ENCODE measurements at regions of chr4 and their contacts with region 1.

Region 1: DNA sequence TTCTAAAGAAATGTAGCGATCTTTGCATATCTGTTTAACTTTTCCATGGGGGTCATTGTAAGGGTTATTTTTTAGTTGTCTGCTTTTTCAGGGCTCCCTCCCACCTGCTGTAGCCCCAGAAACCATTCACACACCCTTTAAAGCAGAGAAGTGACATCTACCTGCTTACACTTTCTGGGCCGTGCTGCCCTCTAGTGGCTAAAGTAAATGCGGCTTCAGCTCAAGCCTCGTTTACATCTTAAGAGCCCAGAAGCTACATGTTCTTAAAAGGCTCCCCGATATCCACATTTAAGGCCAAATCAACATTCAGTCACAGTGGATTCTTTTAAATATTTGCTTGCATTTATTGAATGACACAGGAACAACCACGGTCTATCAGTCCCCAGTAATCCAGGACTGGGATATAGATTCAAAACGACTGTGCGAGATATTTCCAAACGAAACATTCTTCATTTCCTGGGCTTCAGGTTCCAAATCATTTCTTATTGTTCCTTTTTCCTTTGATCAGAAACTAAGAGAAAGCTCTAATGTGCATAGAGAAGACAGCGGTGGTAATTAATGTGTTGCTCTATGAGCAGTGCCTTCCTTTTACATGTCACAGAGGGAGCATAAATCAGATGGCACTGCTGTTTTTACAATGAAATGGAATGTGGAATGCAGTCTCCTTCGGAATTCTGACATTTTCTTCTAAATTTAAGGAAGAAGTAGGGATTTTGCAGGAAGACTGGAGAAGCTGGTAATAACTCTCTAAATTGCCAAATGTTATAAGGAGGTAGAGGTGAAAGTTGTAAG is 119.9 kb downstream of the RASGEF1B start:
- DNase-seq: peak; percentile 46 to 64
- ATAC-seq: peak in 3 of 8 donors; percentile 34 to 67 (median 48)
- H3K4me3 ChIP-seq: no peak overlapping the region
- H3K27ac ChIP-seq: no peak overlapping the region
- H3K4me1 ChIP-seq: no peaks in the 10 kb centered on the region
- H3K27me3 ChIP-seq: peaks cover 0 to 8% (median 0%) of the 10 kb centered on the region in 7 donors
- CTCF ChIP-seq: peak; percentile 56 to 90 (median 87)

Region 2: GRCh38 chr4:81069706-81070331 is 282.0 kb before region 1 on chr4:
- intact Hi-C with region 1: loop called (anchors 1 to 5 kb)
- DNase-seq: peak in 1 of 2 donors; percentile 57
- ATAC-seq: peak; percentile 49 to 79 (median 65)
- H3K4me3 ChIP-seq: no peak overlapping the region
- H3K27ac ChIP-seq: no peak overlapping the region
- H3K4me1 ChIP-seq: no peaks in the 10 kb centered on the region
- H3K27me3 ChIP-seq: peaks cover 0 to 3% (median 0%) of the 10 kb centered on the region in 7 donors
- CTCF ChIP-seq: peak; percentile 65 to 93 (median 87)

Region 3: GRCh38 chr4:81429607-81430006 is 77.8 kb after region 1 on chr4:
- intact Hi-C with region 1: no loop called
- DNase-seq: no peak
- ATAC-seq: peak in 1 of 8 donors; percentile 9
- H3K4me3 ChIP-seq: no peak overlapping the region
- H3K27ac ChIP-seq: no peak overlapping the region
- H3K4me1 ChIP-seq: no peaks in the 10 kb centered on the region
- H3K27me3 ChIP-seq: no peaks in the 10 kb centered on the region
- CTCF ChIP-seq: no peak

Measured in heart right ventricle (tissue), 16 donors.